Naive thymus-derived CD4-positive, alpha-beta T cell (primary cell): ENCODE measurements at regions of chr6 and their contacts with region 1.

Region 1: DNA sequence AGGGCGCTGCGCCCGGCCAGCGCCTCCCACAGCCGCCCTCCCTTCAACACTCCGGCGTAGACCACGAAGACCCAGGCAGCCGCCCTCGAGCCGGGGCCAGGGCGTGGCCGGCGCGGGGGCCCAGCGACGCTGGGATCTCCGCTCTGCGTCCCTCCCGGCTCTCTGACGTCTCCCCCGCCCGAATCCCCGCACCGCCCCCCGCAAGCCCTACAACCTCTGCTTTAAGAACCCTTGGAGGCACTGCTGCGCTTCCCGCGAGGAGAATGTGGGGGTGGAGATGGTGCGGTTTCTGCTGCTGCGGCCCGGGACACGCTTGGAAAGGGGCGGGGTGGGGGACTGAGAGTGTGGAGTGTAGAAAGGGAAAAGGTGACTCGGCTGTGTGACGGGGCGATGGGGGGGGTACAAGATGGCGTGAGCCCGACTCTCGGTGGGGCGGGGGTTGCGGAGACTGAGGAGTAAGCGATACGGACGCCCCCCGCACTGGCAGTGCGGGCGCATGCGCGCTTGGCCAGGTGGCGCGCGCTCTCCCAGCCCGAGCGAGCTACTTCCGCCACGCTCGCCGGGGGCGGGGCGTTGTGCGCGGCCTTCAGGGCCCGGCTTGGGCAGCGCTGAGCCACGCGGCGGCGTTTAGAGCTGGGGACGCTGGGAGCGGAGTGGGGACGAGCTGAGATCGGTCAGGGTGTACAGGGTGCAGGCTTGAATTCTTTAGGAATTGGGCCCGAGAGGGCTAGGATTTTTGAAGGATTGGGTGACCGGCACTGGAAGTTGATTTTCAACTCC is at the start of gene SUPT3H:
- DNase-seq: peak; percentile 87 to 96 (median 89)
- ATAC-seq: peak; percentile 90
- H3K4me3 ChIP-seq: peak within 1 kb of the TSS; percentile 75
- H3K4me3 Mint-ChIP-seq: peak within 1 kb of the TSS; percentile 89 to 100 (median 98)
- H3K27ac ChIP-seq: peak within 1 kb of the TSS; percentile 86
- H3K27ac Mint-ChIP-seq: peak within 1 kb of the TSS; percentile 96 to 100 (median 98)
- H3K4me1 ChIP-seq: peaks cover 0 to 14% of the 10 kb centered on the region in 2 donors
- H3K4me1 Mint-ChIP-seq: peaks cover 14 to 35% (median 28%) of the 10 kb centered on the region in 7 donors
- H3K27me3 ChIP-seq: no peaks in the 10 kb centered on the region
- H3K27me3 Mint-ChIP-seq: no peaks in the 10 kb centered on the region
- total RNA-seq, gene SUPT3H: 10.0 to 16.0 (median 12.7) TPM

Region 2: GRCh38 chr6:43900911-43901732 is 1476.6 kb before region 1 on chr6:
- CTCF ChIA-PET with region 1: no interaction called
- POLR2A ChIA-PET with region 1: no interaction called
- intact Hi-C with region 1: no loop called
- DNase-seq: no peak
- ATAC-seq: no peak
- H3K4me3 ChIP-seq: no peak overlapping the region
- H3K4me3 Mint-ChIP-seq: no peak overlapping the region
- H3K27ac ChIP-seq: no peak overlapping the region
- H3K27ac Mint-ChIP-seq: no peak overlapping the region
- H3K4me1 ChIP-seq: no peaks in the 10 kb centered on the region
- H3K4me1 Mint-ChIP-seq: no peaks in the 10 kb centered on the region
- H3K27me3 ChIP-seq: no peaks in the 10 kb centered on the region
- H3K27me3 Mint-ChIP-seq: peaks cover 0 to 13% (median 0%) of the 10 kb centered on the region in 5 donors

Region 3: DNA sequence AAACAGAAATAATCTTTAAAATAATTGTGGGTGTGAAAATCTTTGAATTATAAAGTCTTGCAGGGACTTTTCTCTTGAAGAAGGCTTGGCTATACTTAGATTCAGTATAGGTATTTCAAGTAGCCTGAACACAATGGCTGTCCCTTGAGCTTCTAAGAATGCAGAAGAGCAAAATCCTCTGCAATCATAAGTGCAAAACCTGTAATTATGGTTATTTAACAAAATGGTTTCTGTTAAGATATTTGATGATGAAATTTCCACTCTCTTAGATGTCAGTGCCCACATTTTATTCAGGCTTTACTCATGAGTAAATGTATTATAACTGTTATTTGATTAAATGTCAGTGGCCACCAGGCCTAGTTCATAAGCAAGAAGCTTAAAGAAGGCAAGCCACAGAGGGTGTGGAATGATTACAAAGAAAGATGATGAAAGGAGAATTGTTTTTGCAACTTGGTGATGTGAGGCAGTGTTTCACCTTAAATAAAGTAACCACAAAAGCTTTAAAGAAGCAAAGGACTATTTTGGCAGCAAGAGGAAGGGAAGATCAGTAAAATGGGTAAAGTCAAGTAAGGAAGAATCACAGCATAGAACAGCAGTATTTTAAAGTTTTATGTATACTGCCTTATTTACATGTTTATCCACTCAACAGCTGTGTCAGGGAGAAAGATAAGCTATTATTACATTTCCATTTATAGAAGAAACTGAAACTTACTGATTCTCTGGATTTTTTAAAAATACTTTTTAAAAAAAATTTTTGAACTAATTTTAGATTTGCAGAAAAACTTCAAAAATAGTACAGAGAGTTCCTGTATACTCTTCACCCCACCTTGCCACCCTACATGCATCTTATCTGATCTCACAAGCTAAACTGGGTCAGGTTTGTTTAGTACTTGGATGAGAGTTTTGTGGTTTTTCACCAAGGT is 400.8 kb before region 1 on chr6:
- CTCF ChIA-PET with region 1: no interaction called
- POLR2A ChIA-PET with region 1: interaction called, 3 read pairs
- intact Hi-C with region 1: loop called in 1 of 2 experiments (anchors 1 kb)
- DNase-seq: peak in 7 of 9 donors; percentile 57 to 84 (median 73)
- ATAC-seq: peak; percentile 93
- H3K4me3 ChIP-seq: no peak overlapping the region
- H3K4me3 Mint-ChIP-seq: peak overlapping the region; percentile 23 to 74 (median 58)
- H3K27ac ChIP-seq: peak overlapping the region; percentile 18
- H3K27ac Mint-ChIP-seq: peak overlapping the region; percentile 20 to 88 (median 80)
- H3K4me1 ChIP-seq: peaks cover 6 to 23% of the 10 kb centered on the region in 2 donors
- H3K4me1 Mint-ChIP-seq: peaks cover 8 to 76% (median 47%) of the 10 kb centered on the region in 7 donors
- H3K27me3 ChIP-seq: no peaks in the 10 kb centered on the region
- H3K27me3 Mint-ChIP-seq: no peaks in the 10 kb centered on the region

Region 4: DNA sequence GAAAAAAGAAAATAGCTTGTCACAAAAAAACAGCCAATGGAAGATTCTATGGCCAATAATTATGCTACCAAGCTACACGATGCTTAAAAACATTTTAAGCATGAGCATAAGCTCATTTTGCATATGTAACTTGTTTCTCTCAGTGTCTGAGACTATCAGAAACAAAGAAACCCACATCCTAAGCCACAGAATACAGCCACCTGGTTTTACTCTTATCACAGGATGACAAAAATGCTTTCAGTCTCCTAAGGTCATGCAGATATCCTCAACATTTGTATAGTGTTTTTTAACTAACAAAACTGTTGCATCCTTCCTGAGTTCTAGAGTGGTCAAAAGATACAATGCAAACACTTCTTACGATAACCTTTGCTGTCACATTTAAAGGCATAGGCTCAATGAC is 221.7 kb before region 1 on chr6:
- CTCF ChIA-PET with region 1: interaction called, 3 read pairs
- POLR2A ChIA-PET with region 1: interaction called, 3 read pairs
- intact Hi-C with region 1: loop called (anchors 2 to 5 kb)
- DNase-seq: peak in 7 of 9 donors; percentile 46 to 81 (median 76)
- ATAC-seq: peak; percentile 96
- H3K4me3 ChIP-seq: no peak overlapping the region
- H3K4me3 Mint-ChIP-seq: peak overlapping the region in 9 of 10 donors; percentile 0 to 63 (median 39)
- H3K27ac ChIP-seq: no peak overlapping the region
- H3K27ac Mint-ChIP-seq: peak overlapping the region in 8 of 9 donors; percentile 27 to 89 (median 60)
- H3K4me1 ChIP-seq: peaks cover 7 to 12% of the 10 kb centered on the region in 2 donors
- H3K4me1 Mint-ChIP-seq: peaks cover 2 to 43% (median 29%) of the 10 kb centered on the region in 7 donors
- H3K27me3 ChIP-seq: no peaks in the 10 kb centered on the region
- H3K27me3 Mint-ChIP-seq: no peaks in the 10 kb centered on the region

Region 5: GRCh38 chr6:45187836-45188235 is 189.9 kb before region 1 on chr6:
- CTCF ChIA-PET with region 1: no interaction called
- POLR2A ChIA-PET with region 1: no interaction called
- intact Hi-C with region 1: no loop called
- DNase-seq: no peak
- ATAC-seq: no peak
- H3K4me3 ChIP-seq: no peak overlapping the region
- H3K4me3 Mint-ChIP-seq: no peak overlapping the region
- H3K27ac ChIP-seq: no peak overlapping the region
- H3K27ac Mint-ChIP-seq: no peak overlapping the region
- H3K4me1 ChIP-seq: peaks cover 0 to 6% of the 10 kb centered on the region in 2 donors
- H3K4me1 Mint-ChIP-seq: peaks cover 10 to 30% (median 25%) of the 10 kb centered on the region in 7 donors
- H3K27me3 ChIP-seq: no peaks in the 10 kb centered on the region
- H3K27me3 Mint-ChIP-seq: no peaks in the 10 kb centered on the region

Region 6: GRCh38 chr6:45310118-45310788 is 67.5 kb before region 1 on chr6:
- CTCF ChIA-PET with region 1: no interaction called
- POLR2A ChIA-PET with region 1: interaction called, 17 read pairs
- intact Hi-C with region 1: loop called in 1 of 2 experiments (anchors 1 kb)
- DNase-seq: peak in 8 of 9 donors; percentile 24 to 71 (median 60)
- ATAC-seq: peak; percentile 76
- H3K4me3 ChIP-seq: peak overlapping the region; percentile 32
- H3K4me3 Mint-ChIP-seq: peak overlapping the region; percentile 63 to 84 (median 80)
- H3K27ac ChIP-seq: peak overlapping the region; percentile 44
- H3K27ac Mint-ChIP-seq: peak overlapping the region; percentile 85 to 95 (median 90)
- H3K4me1 ChIP-seq: peaks cover 14 to 33% of the 10 kb centered on the region in 2 donors
- H3K4me1 Mint-ChIP-seq: peaks cover 39 to 86% (median 78%) of the 10 kb centered on the region in 7 donors
- H3K27me3 ChIP-seq: no peaks in the 10 kb centered on the region
- H3K27me3 Mint-ChIP-seq: no peaks in the 10 kb centered on the region

Region 7: GRCh38 chr6:45350186-45350710 is 27.5 kb before region 1 on chr6:
- CTCF ChIA-PET with region 1: no interaction called
- POLR2A ChIA-PET with region 1: no interaction called
- intact Hi-C with region 1: no loop called
- DNase-seq: no peak
- ATAC-seq: no peak
- H3K4me3 ChIP-seq: no peak overlapping the region
- H3K4me3 Mint-ChIP-seq: no peak overlapping the region
- H3K27ac ChIP-seq: no peak overlapping the region
- H3K27ac Mint-ChIP-seq: no peak overlapping the region
- H3K4me1 ChIP-seq: no peaks in the 10 kb centered on the region
- H3K4me1 Mint-ChIP-seq: peaks cover 3 to 20% (median 12%) of the 10 kb centered on the region in 7 donors
- H3K27me3 ChIP-seq: no peaks in the 10 kb centered on the region
- H3K27me3 Mint-ChIP-seq: no peaks in the 10 kb centered on the region

Region 8: GRCh38 chr6:45922728-45923351 is 545.1 kb after region 1 on chr6:
- CTCF ChIA-PET with region 1: no interaction called
- POLR2A ChIA-PET with region 1: no interaction called
- intact Hi-C with region 1: loop called in 1 of 2 experiments (anchors 2 kb)
- DNase-seq: peak in 8 of 9 donors; percentile 13 to 59 (median 36)
- ATAC-seq: peak; percentile 67
- H3K4me3 ChIP-seq: no peak overlapping the region
- H3K4me3 Mint-ChIP-seq: no peak overlapping the region
- H3K27ac ChIP-seq: no peak overlapping the region
- H3K27ac Mint-ChIP-seq: peak overlapping the region in 2 of 9 donors; percentile 28 to 75
- H3K4me1 ChIP-seq: no peaks in the 10 kb centered on the region
- H3K4me1 Mint-ChIP-seq: peaks cover 0 to 42% (median 3%) of the 10 kb centered on the region in 7 donors
- H3K27me3 ChIP-seq: no peaks in the 10 kb centered on the region
- H3K27me3 Mint-ChIP-seq: peaks cover 0 to 11% (median 0%) of the 10 kb centered on the region in 5 donors